Cardiac septum (tissue), 1 donor: ENCODE measurements at regions of chr11 and their contacts with region 1.

Region 1: GRCh38 chr11:122505304-122506006 is 150.1 kb upstream of the UBASH3B start:
- DNase-seq: peak; percentile 80

Region 2: DNA sequence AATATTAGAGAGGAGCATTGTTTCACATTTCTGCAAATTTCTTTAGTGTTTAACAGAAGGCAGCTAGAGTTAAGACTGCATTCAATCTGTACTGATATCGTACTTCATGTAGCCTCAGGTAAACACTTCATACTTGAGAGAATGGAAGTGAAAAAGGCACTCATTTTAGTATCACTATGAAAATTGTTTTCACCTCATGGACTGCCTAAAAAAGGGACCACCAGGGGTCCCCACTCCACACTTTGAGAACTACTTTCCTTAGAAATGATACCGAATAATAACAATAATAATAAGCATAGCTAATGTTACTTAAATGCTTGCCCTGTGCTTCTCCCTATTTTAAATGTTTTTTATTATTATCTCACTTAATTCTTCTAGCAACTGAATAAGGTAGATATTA is 484.6 kb before region 1 on chr11:
- intact Hi-C with region 1: loop called (anchors 10 kb)
- DNase-seq: no peak

Region 3: DNA sequence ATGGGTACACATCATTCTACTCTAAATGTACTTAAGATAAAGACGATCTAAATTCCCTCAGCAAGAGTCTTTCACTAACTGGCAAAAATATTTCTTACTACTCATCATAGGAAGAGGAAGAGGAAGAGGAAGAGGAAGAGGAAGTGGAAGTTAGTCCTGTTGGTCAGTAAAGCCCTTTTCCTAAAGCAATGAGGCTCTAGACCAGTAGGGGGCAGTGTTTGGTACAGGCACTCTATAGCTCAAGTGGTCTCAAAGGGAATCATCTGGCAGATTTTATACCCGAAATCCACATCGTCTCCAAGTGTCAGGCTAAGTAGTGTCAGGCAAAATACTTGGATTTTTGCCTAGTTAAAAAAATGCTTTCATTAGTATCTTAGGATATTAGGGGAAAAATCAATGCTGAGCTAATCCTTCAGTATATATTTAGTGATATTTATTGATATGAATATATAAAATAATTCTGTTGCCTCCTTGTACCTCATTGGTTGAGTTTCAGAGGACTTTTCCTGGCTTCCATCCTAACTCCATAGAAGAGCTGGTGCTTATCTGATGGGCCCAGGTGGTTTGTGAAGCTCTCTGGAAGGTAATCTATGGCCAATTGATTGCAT is 397.2 kb before region 1 on chr11:
- intact Hi-C with region 1: loop called (anchors 10 kb)
- DNase-seq: no peak

Region 4: DNA sequence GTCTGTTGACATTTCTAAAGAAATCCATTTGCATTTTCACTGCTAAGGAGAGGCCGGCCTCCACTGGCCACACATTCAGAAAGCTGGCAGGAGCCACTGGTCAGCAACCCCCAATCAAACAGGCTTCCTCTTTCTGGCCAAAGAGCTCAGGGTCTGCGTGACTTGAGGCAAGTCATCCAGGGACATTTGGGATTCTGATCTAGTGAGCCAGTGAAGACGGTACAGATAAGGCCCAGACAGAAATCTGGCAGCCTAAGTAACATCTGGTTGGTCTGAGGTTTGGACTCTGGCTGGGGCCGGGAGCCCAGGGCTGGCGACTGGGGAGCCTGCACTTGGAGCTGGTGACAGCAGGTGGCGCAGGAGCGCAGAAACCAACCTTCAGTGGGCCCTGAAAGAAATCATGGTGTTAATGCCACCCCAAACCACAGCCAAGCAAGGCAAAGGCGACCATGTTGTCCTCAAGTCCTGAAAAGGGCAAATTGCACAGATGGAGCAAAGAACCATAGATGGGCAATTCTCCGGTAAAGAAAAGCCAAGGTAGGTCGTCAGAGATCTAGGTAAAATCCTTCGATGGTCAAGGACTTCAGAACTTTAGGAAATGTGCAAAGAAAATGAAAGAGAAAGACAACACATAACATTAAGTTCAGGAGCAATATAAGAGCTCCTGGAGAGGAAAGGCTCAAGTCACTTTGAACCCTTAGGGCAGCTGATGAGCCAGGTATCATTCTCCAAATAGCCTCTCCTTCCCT is 290.0 kb before region 1 on chr11:
- intact Hi-C with region 1: loop called (anchors 2 kb)
- DNase-seq: peak; percentile 86

Region 5: GRCh38 chr11:122293296-122294023 is 212.0 kb before region 1 on chr11:
- intact Hi-C with region 1: loop called (anchors 2 kb)
- DNase-seq: no peak

Region 6: GRCh38 chr11:122486793-122487495 is 18.5 kb before region 1 on chr11:
- intact Hi-C with region 1: no loop called
- DNase-seq: no peak

Region 7: DNA sequence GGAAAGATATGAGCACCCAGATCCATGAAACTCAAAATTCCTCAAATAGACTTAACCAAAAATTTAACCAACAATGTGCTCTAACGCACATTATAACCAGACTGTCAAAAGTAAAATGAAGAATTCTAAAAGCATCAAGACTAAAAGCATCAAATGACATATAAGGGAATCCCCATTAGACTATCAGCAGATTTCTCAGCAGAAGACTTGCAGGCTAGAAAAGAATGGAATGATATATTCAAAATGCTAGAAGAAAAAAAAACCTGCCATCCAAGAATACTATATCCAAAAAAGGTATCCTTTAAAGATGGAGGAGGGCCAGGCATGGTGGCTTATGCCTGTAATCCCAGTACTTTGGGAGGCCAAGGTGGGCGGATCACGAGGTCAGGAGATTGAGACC is 32.6 kb after region 1 on chr11:
- intact Hi-C with region 1: no loop called
- DNase-seq: no peak

Region 8: GRCh38 chr11:122954455-122954854 is 449.0 kb after region 1 on chr11:
- intact Hi-C with region 1: no loop called
- DNase-seq: no peak